Thyroid gland (tissue), 4 donors: ENCODE measurements at regions of chr17 and their contacts with region 1.

Region 1: GRCh38 chr17:58517734-58518609 is 3.5 kb upstream of the MTMR4 start:
- DNase-seq: peak; percentile 100
- H3K4me3 ChIP-seq: peak overlapping the region; percentile 33 to 52 (median 39)
- H3K27ac ChIP-seq: peak overlapping the region; percentile 86 to 92 (median 90)
- H3K4me1 ChIP-seq: peaks cover 27 to 50% of the 10 kb centered on the region in 2 donors
- H3K27me3 ChIP-seq: no peaks in the 10 kb centered on the region
- CTCF ChIP-seq: no peak
- POLR2A ChIP-seq: peak in 1 of 2 donors; percentile 80

Region 2: DNA sequence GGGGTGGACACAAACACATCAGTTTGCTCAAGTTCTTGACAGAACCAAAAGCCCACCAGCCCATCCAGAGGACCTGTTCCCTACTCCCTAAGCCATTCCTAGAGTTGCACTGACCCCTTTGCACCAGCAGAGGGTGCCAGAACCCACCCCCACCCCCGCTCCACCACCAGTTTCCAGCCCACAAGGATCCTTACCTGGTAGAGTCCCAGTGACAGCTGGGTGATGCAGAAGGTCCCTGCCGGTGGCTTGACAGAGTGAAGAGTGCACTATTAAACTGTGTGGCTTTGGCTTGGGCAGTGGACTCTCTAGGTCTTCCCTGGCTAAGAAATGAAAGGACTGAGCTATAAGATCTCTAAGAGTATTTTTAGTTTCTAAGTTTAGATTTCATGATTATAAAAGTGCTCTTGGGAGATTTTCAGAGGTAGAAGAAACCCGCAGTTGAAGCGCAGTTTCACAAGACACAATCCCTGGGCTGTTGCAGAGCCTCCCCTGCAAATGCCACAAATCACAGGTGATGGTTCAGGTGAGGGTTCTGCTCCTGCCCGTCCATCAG is 69.8 kb after region 1 on chr17:
- intact Hi-C with region 1: loop called (anchors 10 kb)
- DNase-seq: peak; percentile 43 to 47
- H3K4me3 ChIP-seq: no peak overlapping the region
- H3K27ac ChIP-seq: no peak overlapping the region
- H3K4me1 ChIP-seq: no peaks in the 10 kb centered on the region
- H3K27me3 ChIP-seq: no peaks in the 10 kb centered on the region
- CTCF ChIP-seq: peak; percentile 57 to 96 (median 74)
- POLR2A ChIP-seq: no peak

Region 3: GRCh38 chr17:58631523-58632323 is 113.8 kb after region 1 on chr17:
- intact Hi-C with region 1: loop called (anchors 10 kb)
- DNase-seq: peak; percentile 84 to 90
- H3K4me3 ChIP-seq: peak overlapping the region in 1 of 3 donors; percentile 12
- H3K27ac ChIP-seq: peak overlapping the region; percentile 24 to 71 (median 47)
- H3K4me1 ChIP-seq: no peaks in the 10 kb centered on the region
- H3K27me3 ChIP-seq: no peaks in the 10 kb centered on the region
- CTCF ChIP-seq: peak in 1 of 6 experiments; percentile 34
- POLR2A ChIP-seq: peak in 1 of 2 donors; percentile 87

Region 4: GRCh38 chr17:59004338-59005111 is 486.6 kb after region 1 on chr17:
- intact Hi-C with region 1: loop called (anchors 5 kb)
- DNase-seq: peak; percentile 58 to 66
- H3K4me3 ChIP-seq: no peak overlapping the region
- H3K27ac ChIP-seq: no peak overlapping the region
- H3K4me1 ChIP-seq: peaks cover 3 to 7% of the 10 kb centered on the region in 2 donors
- H3K27me3 ChIP-seq: no peaks in the 10 kb centered on the region
- CTCF ChIP-seq: peak; percentile 81 to 98 (median 92)
- POLR2A ChIP-seq: no peak